Activated naive CD4-positive, alpha-beta T cell treated with anti-CD3 and anti-CD28 coated beads for 36 hours (primary cell): ENCODE measurements at regions of chr19 and their contacts with region 1.

Region 1: GRCh38 chr19:13195678-13196077 is 45.5 kb downstream of the IER2 start:
- DNase-seq: peak; percentile 75
- H3K4me3 Mint-ChIP-seq: no peak overlapping the region
- H3K27ac Mint-ChIP-seq: no peak overlapping the region
- H3K4me1 Mint-ChIP-seq: peaks cover 25% of the 10 kb centered on the region
- H3K27me3 Mint-ChIP-seq: no peaks in the 10 kb centered on the region

Region 2: GRCh38 chr19:13132471-13133180 is 63.1 kb before region 1 on chr19:
- CTCF ChIA-PET with region 1: no interaction called
- intact Hi-C with region 1: no loop called
- DNase-seq: peak; percentile 51
- H3K4me3 Mint-ChIP-seq: no peak overlapping the region
- H3K27ac Mint-ChIP-seq: peak overlapping the region; percentile 79
- H3K4me1 Mint-ChIP-seq: peaks cover 38% of the 10 kb centered on the region
- H3K27me3 Mint-ChIP-seq: no peaks in the 10 kb centered on the region

Region 3: GRCh38 chr19:13162518-13163314 is 33.0 kb before region 1 on chr19:
- CTCF ChIA-PET with region 1: interaction called, 14 read pairs
- intact Hi-C with region 1: loop called (anchors 5 kb)
- DNase-seq: peak; percentile 98
- H3K4me3 Mint-ChIP-seq: peak overlapping the region; percentile 79
- H3K27ac Mint-ChIP-seq: peak overlapping the region; percentile 97
- H3K4me1 Mint-ChIP-seq: peaks cover 65% of the 10 kb centered on the region
- H3K27me3 Mint-ChIP-seq: no peaks in the 10 kb centered on the region

Region 4: GRCh38 chr19:13212759-13213330 is 17.2 kb after region 1 on chr19:
- CTCF ChIA-PET with region 1: interaction called, 4 read pairs
- intact Hi-C with region 1: loop called (anchors 1 kb)
- DNase-seq: peak; percentile 89
- H3K4me3 Mint-ChIP-seq: no peak overlapping the region
- H3K27ac Mint-ChIP-seq: no peak overlapping the region
- H3K4me1 Mint-ChIP-seq: peaks cover 33% of the 10 kb centered on the region
- H3K27me3 Mint-ChIP-seq: no peaks in the 10 kb centered on the region

Region 5: GRCh38 chr19:13262450-13262849 is 66.8 kb after region 1 on chr19:
- CTCF ChIA-PET with region 1: interaction called, 49 read pairs
- intact Hi-C with region 1: loop called (anchors 1 kb)
- DNase-seq: no peak
- H3K4me3 Mint-ChIP-seq: no peak overlapping the region
- H3K27ac Mint-ChIP-seq: no peak overlapping the region
- H3K4me1 Mint-ChIP-seq: peaks cover 15% of the 10 kb centered on the region
- H3K27me3 Mint-ChIP-seq: peaks cover 9% of the 10 kb centered on the region

Region 6: DNA sequence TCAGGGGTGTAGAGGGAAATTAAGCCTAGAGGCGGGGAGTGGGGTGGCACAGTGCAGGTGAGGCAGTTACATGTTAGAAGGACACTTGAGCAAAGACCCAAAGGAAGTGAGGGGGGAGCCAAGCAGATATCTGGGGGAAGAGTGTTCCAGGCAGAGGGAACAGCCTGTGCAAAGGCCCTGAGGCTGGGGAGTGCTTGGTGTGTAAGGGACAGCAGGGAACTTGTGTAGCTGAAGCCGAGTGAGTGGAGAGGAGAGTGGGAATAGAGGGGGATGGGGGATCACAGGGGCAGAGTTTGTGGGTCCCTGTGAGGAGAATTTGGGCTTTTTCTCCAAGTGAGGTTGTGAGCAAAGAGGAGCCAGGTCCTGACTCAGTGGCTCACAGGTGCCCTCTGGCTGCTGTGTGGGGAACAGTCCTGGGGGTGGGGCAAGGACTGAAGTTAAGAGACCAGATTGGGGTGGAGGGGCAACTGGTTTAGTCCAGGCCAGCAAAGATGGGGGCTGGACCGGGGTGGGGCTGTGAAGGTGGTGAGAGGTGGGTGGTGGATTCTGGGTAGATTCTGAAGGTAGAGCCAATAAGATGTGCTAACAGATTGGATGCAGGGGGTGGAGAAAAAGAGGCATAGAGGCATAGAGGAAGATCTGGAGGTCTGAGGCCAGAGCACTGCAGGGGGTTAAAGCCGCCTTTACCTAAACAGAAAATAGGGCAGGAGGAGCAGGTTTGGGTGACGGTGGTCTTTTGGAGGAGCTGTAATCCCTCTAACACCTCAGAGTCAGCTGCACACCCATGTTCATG is 235.3 kb after region 1 on chr19:
- CTCF ChIA-PET with region 1: interaction called, 3 read pairs
- intact Hi-C with region 1: loop called (anchors 1 kb)
- DNase-seq: peak; percentile 77
- H3K4me3 Mint-ChIP-seq: no peak overlapping the region
- H3K27ac Mint-ChIP-seq: no peak overlapping the region
- H3K4me1 Mint-ChIP-seq: no peaks in the 10 kb centered on the region
- H3K27me3 Mint-ChIP-seq: peaks cover 21% of the 10 kb centered on the region